Naive thymus-derived CD4-positive, alpha-beta T cell (primary cell): ENCODE measurements at regions of chr12 and their contacts with region 1.

Region 1: DNA sequence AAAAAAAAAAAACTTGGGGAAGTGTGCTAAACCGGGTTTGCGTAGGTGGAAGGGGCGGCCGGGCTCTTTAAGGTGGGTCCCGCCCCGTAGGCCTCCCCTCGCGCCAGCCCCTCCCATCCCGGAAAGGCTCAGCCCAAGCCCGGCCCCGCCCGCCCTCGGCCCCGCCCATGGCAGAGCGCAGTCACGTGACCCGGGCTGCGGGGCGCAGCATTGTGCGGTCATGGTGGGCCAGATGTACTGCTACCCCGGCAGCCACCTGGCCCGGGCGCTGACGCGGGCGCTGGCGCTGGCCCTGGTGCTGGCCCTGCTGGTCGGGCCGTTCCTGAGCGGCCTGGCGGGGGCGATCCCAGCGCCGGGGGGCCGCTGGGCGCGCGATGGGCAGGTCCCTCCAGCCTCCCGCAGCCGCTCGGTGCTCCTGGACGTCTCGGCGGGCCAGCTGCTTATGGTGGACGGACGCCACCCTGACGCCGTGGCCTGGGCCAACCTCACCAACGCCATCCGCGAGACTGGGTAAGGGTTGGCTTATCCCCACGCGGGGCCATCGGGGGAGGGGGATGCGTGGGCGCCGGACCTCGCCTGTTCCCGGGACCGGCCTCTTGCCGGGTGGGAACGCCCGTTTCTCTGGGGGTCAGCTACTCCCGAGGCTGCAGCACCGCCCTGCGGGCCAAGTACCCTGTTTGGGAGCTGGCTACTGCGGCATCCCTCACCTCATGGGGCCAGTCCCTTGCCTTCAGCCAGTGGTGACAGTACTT is at the start of gene PLBD2:
- DNase-seq: peak; percentile 85 to 95 (median 92)
- ATAC-seq: peak; percentile 98
- H3K4me3 ChIP-seq: peak within 1 kb of the TSS; percentile 82
- H3K4me3 Mint-ChIP-seq: peak within 1 kb of the TSS; percentile 83 to 94 (median 91)
- H3K27ac ChIP-seq: peak within 1 kb of the TSS; percentile 85
- H3K27ac Mint-ChIP-seq: peak within 1 kb of the TSS; percentile 79 to 98 (median 95)
- H3K4me1 ChIP-seq: peaks cover 0 to 5% of the 10 kb centered on the region in 2 donors
- H3K4me1 Mint-ChIP-seq: peaks cover 13 to 25% (median 17%) of the 10 kb centered on the region in 7 donors
- H3K27me3 ChIP-seq: no peaks in the 10 kb centered on the region
- H3K27me3 Mint-ChIP-seq: peaks cover 0 to 3% (median 0%) of the 10 kb centered on the region in 5 donors
- total RNA-seq, gene PLBD2: 13.2 to 25.4 (median 14.9) TPM

Region 2: DNA sequence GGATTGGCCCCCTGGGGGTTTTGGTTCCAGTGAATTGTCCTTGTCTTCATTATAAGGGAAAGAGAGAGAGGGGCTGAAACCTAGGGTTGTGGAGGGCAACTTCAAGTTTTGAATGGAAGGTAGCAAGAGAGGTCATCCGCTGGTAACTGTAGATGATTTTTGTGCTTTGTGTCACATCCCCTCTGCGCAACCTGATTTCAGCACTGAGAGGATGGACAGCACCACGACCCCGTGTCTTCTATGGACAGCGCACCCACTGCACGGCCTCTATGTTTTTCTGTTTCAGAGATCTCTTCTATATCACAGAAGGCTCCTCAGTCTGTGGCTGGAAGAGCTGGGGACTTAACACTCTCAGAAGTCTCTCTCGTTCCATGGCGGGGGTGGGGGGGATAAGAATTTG is 694.0 kb before region 1 on chr12:
- CTCF ChIA-PET with region 1: no interaction called
- POLR2A ChIA-PET with region 1: no interaction called
- intact Hi-C with region 1: no loop called
- DNase-seq: no peak
- ATAC-seq: no peak
- H3K4me3 ChIP-seq: no peak overlapping the region
- H3K4me3 Mint-ChIP-seq: no peak overlapping the region
- H3K27ac ChIP-seq: no peak overlapping the region
- H3K27ac Mint-ChIP-seq: no peak overlapping the region
- H3K4me1 ChIP-seq: peaks cover 0 to 10% of the 10 kb centered on the region in 2 donors
- H3K4me1 Mint-ChIP-seq: peaks cover 0 to 2% (median 0%) of the 10 kb centered on the region in 7 donors
- H3K27me3 ChIP-seq: no peaks in the 10 kb centered on the region
- H3K27me3 Mint-ChIP-seq: peaks cover 4 to 55% (median 22%) of the 10 kb centered on the region in 5 donors

Region 3: DNA sequence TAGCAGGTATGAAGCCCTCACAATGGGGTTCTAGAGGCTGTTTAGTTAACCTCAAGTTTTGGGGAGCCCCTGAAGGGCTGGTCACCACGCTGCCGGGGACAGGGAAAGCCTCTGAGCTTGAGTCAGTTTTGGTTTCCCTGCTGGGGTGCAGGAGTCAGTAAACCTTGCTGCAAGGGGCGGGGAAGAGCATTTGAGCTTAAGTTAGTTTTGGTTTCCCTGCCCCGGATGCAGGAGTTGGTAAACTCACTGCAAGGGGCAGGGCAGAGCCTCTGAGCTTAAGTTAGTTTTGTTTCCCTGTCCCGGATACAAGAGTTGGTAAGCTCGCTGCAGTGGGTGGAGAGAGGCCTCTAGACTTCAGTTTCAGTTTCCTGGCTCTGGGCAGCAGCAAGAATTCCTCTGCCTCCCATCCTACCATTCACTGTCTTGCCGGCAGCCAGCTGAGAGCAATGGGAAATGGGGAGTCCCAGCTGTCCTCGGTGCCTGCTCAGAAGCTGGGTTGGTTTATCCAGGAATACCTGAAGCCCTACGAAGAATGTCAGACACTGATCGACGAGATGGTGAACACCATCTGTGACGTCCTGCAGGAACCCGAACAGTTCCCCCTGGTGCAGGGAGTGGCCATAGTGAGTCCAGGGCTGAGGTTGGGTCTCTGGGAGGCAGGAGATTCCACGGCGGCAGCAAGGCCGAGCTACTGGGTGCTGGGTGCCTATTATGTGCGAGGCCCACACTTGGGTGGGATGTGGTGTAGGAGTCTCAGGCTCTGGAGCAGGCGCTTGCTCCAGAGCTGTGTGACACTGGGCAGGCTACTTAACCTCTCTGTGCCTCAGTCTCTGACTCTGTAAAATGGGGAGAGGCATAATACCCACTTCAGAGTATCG is 380.2 kb before region 1 on chr12 and contains the start of gene OAS2:
- CTCF ChIA-PET with region 1: no interaction called
- POLR2A ChIA-PET with region 1: no interaction called
- intact Hi-C with region 1: loop called in 1 of 2 experiments (anchors 1 kb)
- DNase-seq: peak; percentile 35 to 89 (median 85)
- ATAC-seq: peak; percentile 97
- H3K4me3 ChIP-seq: peak within 1 kb of the TSS; percentile 99
- H3K4me3 Mint-ChIP-seq: peak within 1 kb of the TSS; percentile 87 to 100 (median 96)
- H3K27ac ChIP-seq: peak within 1 kb of the TSS; percentile 89
- H3K27ac Mint-ChIP-seq: peak within 1 kb of the TSS; percentile 97 to 100 (median 99)
- H3K4me1 ChIP-seq: peaks cover 34 to 37% of the 10 kb centered on the region in 2 donors
- H3K4me1 Mint-ChIP-seq: peaks cover 30 to 59% (median 42%) of the 10 kb centered on the region in 7 donors
- H3K27me3 ChIP-seq: no peaks in the 10 kb centered on the region
- H3K27me3 Mint-ChIP-seq: no peaks in the 10 kb centered on the region
- total RNA-seq, gene OAS2: 29.9 to 238 (median 66.0) TPM

Region 4: GRCh38 chr12:113103756-113104450 is 254.7 kb before region 1 on chr12:
- CTCF ChIA-PET with region 1: no interaction called
- POLR2A ChIA-PET with region 1: no interaction called
- intact Hi-C with region 1: loop called in 1 of 2 experiments (anchors 1 kb)
- DNase-seq: peak; percentile 46 to 80 (median 76)
- ATAC-seq: peak; percentile 92
- H3K4me3 ChIP-seq: peak overlapping the region; percentile 65
- H3K4me3 Mint-ChIP-seq: peak overlapping the region; percentile 74 to 91 (median 86)
- H3K27ac ChIP-seq: peak overlapping the region; percentile 10
- H3K27ac Mint-ChIP-seq: peak overlapping the region; percentile 18 to 93 (median 87)
- H3K4me1 ChIP-seq: peaks cover 0 to 8% of the 10 kb centered on the region in 2 donors
- H3K4me1 Mint-ChIP-seq: peaks cover 7 to 28% (median 12%) of the 10 kb centered on the region in 7 donors
- H3K27me3 ChIP-seq: no peaks in the 10 kb centered on the region
- H3K27me3 Mint-ChIP-seq: no peaks in the 10 kb centered on the region

Region 5: DNA sequence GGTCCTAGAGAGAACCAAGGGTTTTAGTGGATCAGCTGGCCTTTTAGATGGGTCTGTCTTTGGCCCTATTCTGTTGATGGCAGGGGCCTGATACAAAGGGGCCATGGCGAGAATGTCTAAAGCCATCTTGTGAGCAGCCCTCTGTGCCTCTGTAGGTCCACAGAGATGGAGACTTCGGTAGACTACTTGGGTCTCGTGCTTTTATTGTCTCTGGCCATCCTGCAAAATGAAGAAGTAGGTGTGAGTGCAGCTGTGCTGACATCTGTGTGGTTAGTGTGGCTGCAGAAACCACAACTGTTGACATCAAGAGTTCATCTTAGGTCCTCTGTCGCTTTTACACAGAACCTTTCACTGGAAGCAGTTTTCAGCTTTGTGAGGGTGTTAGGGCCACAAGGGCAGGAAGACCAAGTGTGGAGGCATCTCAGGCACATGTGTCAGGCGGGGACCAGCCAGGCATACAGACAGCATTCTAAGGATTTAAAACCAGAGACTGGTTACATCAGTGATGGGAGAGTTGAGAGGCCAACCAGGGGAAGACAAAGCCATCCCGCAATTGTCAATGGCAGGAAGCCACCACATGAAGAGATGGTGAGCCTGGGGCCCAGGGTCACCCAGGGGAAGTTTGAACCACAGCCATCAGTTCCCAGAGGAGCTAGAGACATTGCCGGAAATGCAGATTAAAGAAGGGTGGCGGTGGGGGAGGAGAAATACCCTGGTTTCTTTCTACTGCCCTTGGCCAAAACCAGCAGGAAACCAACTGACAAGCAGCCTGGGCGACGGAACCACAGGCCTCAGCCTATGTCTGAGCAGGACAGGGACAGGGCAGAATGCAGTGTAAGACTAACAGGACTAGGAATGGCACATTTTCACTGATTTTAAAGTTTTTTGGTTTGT is 150.3 kb before region 1 on chr12:
- CTCF ChIA-PET with region 1: no interaction called
- POLR2A ChIA-PET with region 1: no interaction called
- intact Hi-C with region 1: loop called in 1 of 2 experiments (anchors 5 kb)
- DNase-seq: peak; percentile 18 to 72 (median 62)
- ATAC-seq: peak; percentile 89
- H3K4me3 ChIP-seq: no peak overlapping the region
- H3K4me3 Mint-ChIP-seq: peak overlapping the region; percentile 59 to 86 (median 77)
- H3K27ac ChIP-seq: peak overlapping the region; percentile 64
- H3K27ac Mint-ChIP-seq: peak overlapping the region; percentile 82 to 97 (median 90)
- H3K4me1 ChIP-seq: peaks cover 38 to 45% of the 10 kb centered on the region in 2 donors
- H3K4me1 Mint-ChIP-seq: peaks cover 28 to 62% (median 51%) of the 10 kb centered on the region in 7 donors
- H3K27me3 ChIP-seq: no peaks in the 10 kb centered on the region
- H3K27me3 Mint-ChIP-seq: no peaks in the 10 kb centered on the region

Region 6: DNA sequence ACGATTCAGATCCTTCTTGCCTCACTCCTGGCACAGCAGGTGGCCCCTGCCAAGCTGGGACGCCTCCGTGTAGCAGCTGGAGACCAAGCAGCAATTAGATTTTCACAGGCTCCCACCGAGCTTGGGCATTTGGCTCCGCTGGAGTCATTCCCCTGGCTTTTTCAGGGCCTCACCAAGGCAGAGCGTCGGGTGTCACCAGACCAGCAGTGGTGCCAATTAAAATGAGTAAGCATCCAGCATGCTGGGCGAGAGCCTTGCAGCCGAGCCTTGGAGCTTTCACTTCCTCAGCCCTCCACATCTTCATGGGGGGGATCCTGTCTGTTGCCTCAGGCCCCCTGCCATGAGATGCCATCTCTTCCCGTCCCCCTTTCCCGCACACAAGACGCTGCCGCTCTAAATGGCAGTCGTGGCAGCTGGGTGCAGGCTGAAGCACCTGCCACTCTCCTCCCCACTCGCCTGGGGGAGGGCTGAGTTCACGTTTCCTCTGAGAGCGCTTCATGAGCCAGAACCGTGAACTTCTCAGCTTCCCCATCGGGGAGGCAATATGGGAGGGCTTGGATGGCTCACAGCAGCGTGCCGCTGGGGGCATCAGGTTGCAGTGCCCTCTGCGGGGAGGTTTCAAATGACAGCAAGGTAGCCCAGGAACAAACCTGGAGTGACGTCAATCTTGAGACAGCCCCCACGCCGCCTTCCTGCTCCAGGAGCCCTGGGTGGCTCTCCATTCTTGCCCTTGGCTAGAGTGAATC is 125.5 kb before region 1 on chr12:
- CTCF ChIA-PET with region 1: no interaction called
- POLR2A ChIA-PET with region 1: no interaction called
- intact Hi-C with region 1: loop called in 1 of 2 experiments (anchors 1 kb)
- DNase-seq: peak; percentile 46 to 91 (median 83)
- ATAC-seq: peak; percentile 95
- H3K4me3 ChIP-seq: peak overlapping the region; percentile 43
- H3K4me3 Mint-ChIP-seq: peak overlapping the region; percentile 81 to 94 (median 86)
- H3K27ac ChIP-seq: peak overlapping the region; percentile 68
- H3K27ac Mint-ChIP-seq: peak overlapping the region; percentile 86 to 96 (median 93)
- H3K4me1 ChIP-seq: peaks cover 7 to 60% of the 10 kb centered on the region in 2 donors
- H3K4me1 Mint-ChIP-seq: peaks cover 59 to 93% (median 75%) of the 10 kb centered on the region in 7 donors
- H3K27me3 ChIP-seq: no peaks in the 10 kb centered on the region
- H3K27me3 Mint-ChIP-seq: no peaks in the 10 kb centered on the region

Region 7: GRCh38 chr12:113347892-113348291 is 10.7 kb before region 1 on chr12:
- CTCF ChIA-PET with region 1: no interaction called
- POLR2A ChIA-PET with region 1: no interaction called
- intact Hi-C with region 1: no loop called
- DNase-seq: no peak
- ATAC-seq: no peak
- H3K4me3 ChIP-seq: no peak overlapping the region
- H3K4me3 Mint-ChIP-seq: no peak overlapping the region
- H3K27ac ChIP-seq: no peak overlapping the region
- H3K27ac Mint-ChIP-seq: no peak overlapping the region
- H3K4me1 ChIP-seq: no peaks in the 10 kb centered on the region
- H3K4me1 Mint-ChIP-seq: peaks cover 0 to 8% (median 4%) of the 10 kb centered on the region in 7 donors
- H3K27me3 ChIP-seq: no peaks in the 10 kb centered on the region
- H3K27me3 Mint-ChIP-seq: peaks cover 0 to 14% (median 7%) of the 10 kb centered on the region in 5 donors

Region 8: DNA sequence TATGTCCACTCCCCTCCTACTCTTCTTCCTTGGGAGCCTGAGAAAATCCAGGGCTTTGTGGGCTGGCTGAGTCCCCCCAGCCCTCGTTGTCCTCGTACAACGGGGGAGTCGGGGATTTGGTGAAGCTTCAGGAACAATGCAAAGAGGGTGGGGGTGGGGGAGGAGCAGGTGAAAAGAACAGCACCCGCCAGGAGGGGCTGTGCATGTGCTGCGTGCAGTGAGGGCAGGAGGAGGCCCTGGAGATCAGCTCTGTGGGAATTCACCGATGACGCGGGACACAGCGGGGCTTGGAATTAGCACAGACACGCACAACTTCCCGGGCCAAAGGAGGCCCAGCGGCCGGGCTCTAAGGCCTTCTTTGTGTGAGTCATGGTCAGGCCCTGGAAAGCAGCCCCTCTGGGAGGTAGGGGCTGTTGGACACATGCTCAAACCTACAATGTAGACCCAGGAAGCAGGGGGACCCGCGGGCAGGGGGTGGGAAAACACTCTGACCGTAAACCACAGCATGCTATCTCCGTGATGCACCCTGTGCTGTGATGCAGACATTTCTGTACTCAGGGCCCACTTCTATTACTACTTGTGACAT is 574.7 kb after region 1 on chr12:
- CTCF ChIA-PET with region 1: no interaction called
- POLR2A ChIA-PET with region 1: no interaction called
- intact Hi-C with region 1: no loop called
- DNase-seq: no peak
- ATAC-seq: no peak
- H3K4me3 ChIP-seq: no peak overlapping the region
- H3K4me3 Mint-ChIP-seq: no peak overlapping the region
- H3K27ac ChIP-seq: no peak overlapping the region
- H3K27ac Mint-ChIP-seq: peak overlapping the region in 1 of 9 donors; percentile 21
- H3K4me1 ChIP-seq: no peaks in the 10 kb centered on the region
- H3K4me1 Mint-ChIP-seq: peaks cover 0 to 18% (median 9%) of the 10 kb centered on the region in 7 donors
- H3K27me3 ChIP-seq: no peaks in the 10 kb centered on the region
- H3K27me3 Mint-ChIP-seq: no peaks in the 10 kb centered on the region

Region 9: GRCh38 chr12:113965951-113966797 is 607.6 kb after region 1 on chr12 and contains the start of gene RBM19:
- CTCF ChIA-PET with region 1: no interaction called
- POLR2A ChIA-PET with region 1: no interaction called
- intact Hi-C with region 1: loop called in 1 of 2 experiments (anchors 2 kb)
- DNase-seq: peak; percentile 94 to 98 (median 96)
- ATAC-seq: peak; percentile 99
- H3K4me3 ChIP-seq: peak within 1 kb of the TSS; percentile 88
- H3K4me3 Mint-ChIP-seq: peak within 1 kb of the TSS; percentile 94 to 100 (median 98)
- H3K27ac ChIP-seq: peak within 1 kb of the TSS; percentile 54
- H3K27ac Mint-ChIP-seq: peak within 1 kb of the TSS; percentile 92 to 98 (median 95)
- H3K4me1 ChIP-seq: peaks cover 5% of the 10 kb centered on the region in 2 donors
- H3K4me1 Mint-ChIP-seq: peaks cover 38 to 72% (median 53%) of the 10 kb centered on the region in 7 donors
- H3K27me3 ChIP-seq: no peaks in the 10 kb centered on the region
- H3K27me3 Mint-ChIP-seq: peaks cover 0 to 9% (median 0%) of the 10 kb centered on the region in 5 donors
- total RNA-seq, gene RBM19: 45.8 to 108 (median 67.3) TPM